ENCODE measurements at regions of chr9 and their contacts with region 1.

Region 1: DNA sequence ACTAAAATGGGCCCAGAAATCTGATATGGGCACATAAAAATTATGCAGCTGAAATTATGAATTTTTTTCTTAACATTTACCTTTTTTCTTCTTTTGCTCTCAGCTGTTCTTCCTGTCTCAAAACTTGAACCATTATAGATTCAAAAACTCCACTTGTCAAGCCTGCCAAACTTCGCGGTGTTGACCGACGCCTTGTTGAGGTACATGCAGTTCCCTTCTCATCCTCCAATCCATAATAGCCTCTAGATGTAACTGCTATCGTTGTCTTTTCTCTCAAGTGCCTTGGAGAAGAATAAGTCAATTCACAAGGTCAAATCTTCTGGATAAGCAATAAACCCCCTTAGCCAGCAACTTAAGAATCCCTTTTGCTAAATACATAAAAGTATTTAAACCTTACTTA is 27.2 kb downstream of the RANBP6 start:
- DNase-seq: no peak
- ATAC-seq: no peak
- H3K4me3 ChIP-seq: no peak overlapping the region
- H3K4me3 Mint-ChIP-seq: no peak overlapping the region
- H3K27ac ChIP-seq: no peak overlapping the region
- H3K27ac Mint-ChIP-seq: no peak overlapping the region
- H3K4me1 ChIP-seq: no peaks in the 10 kb centered on the region
- H3K4me1 Mint-ChIP-seq: peaks cover 46% of the 10 kb centered on the region
- H3K27me3 ChIP-seq: no peaks in the 10 kb centered on the region
- H3K27me3 Mint-ChIP-seq: no peaks in the 10 kb centered on the region
- CTCF ChIP-seq: no peak

Region 2: GRCh38 chr9:5800969-5801738 is 187.1 kb before region 1 on chr9:
- CTCF ChIA-PET with region 1: no interaction called
- POLR2A ChIA-PET with region 1: no interaction called
- intact Hi-C with region 1: no loop called
- DNase-seq: peak in 1 of 14 experiments; percentile 13
- ATAC-seq: no peak
- H3K4me3 ChIP-seq: no peak overlapping the region
- H3K4me3 Mint-ChIP-seq: no peak overlapping the region
- H3K27ac ChIP-seq: no peak overlapping the region
- H3K27ac Mint-ChIP-seq: no peak overlapping the region
- H3K4me1 ChIP-seq: no peaks in the 10 kb centered on the region
- H3K4me1 Mint-ChIP-seq: peaks cover 6% of the 10 kb centered on the region
- H3K27me3 ChIP-seq: no peaks in the 10 kb centered on the region
- H3K27me3 Mint-ChIP-seq: no peaks in the 10 kb centered on the region
- CTCF ChIP-seq: no peak

Region 3: DNA sequence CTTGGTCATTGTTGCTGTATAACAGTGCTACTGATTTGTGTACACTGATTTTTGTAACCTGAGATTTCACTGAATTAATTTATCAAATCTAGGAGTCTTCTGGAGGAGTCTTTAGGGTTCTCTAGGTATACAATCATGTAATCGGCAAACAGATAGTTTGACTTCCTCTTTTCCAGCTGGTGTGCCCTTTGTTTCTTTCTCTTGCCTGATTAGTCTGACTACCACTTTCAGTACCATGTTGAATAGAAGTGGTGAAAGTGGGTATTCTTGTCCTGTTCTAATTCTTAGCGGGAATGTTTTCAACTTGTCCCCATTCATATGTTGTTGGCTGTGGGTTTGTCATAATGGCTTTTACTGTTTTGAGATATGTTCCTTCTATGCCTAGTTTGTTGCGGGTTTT is 51.8 kb after region 1 on chr9:
- CTCF ChIA-PET with region 1: no interaction called
- POLR2A ChIA-PET with region 1: interaction called, 3 read pairs
- intact Hi-C with region 1: loop called in 1 of 2 experiments (anchors 5 kb)
- DNase-seq: no peak
- ATAC-seq: no peak
- H3K4me3 ChIP-seq: no peak overlapping the region
- H3K4me3 Mint-ChIP-seq: no peak overlapping the region
- H3K27ac ChIP-seq: no peak overlapping the region
- H3K27ac Mint-ChIP-seq: no peak overlapping the region
- H3K4me1 ChIP-seq: no peaks in the 10 kb centered on the region
- H3K4me1 Mint-ChIP-seq: no peaks in the 10 kb centered on the region
- H3K27me3 ChIP-seq: no peaks in the 10 kb centered on the region
- H3K27me3 Mint-ChIP-seq: peaks cover 19% of the 10 kb centered on the region
- CTCF ChIP-seq: no peak

Measured in CD4-positive, alpha-beta T cell (primary cell).